B cell (primary cell): ENCODE measurements at regions of chr17 and their contacts with region 1.

Region 1: GRCh38 chr17:7851438-7852256 is 3.2 kb upstream of the TMEM88 start:
- DNase-seq: peak; percentile 98
- ATAC-seq: peak; percentile 95
- H3K4me3 ChIP-seq: peak overlapping the region in 4 of 5 experiments; percentile 28 to 50 (median 38)
- H3K4me3 Mint-ChIP-seq: peak overlapping the region; percentile 71
- H3K27ac ChIP-seq: peak overlapping the region; percentile 55 to 56
- H3K27ac Mint-ChIP-seq: peak overlapping the region; percentile 82
- H3K4me1 ChIP-seq: peaks cover 20 to 33% of the 10 kb centered on the region in 2 donors
- H3K4me1 Mint-ChIP-seq: peaks cover 24% of the 10 kb centered on the region
- H3K27me3 ChIP-seq: no peaks in the 10 kb centered on the region
- H3K27me3 Mint-ChIP-seq: no peaks in the 10 kb centered on the region
- CTCF ChIP-seq: peak; percentile 93

Region 2: DNA sequence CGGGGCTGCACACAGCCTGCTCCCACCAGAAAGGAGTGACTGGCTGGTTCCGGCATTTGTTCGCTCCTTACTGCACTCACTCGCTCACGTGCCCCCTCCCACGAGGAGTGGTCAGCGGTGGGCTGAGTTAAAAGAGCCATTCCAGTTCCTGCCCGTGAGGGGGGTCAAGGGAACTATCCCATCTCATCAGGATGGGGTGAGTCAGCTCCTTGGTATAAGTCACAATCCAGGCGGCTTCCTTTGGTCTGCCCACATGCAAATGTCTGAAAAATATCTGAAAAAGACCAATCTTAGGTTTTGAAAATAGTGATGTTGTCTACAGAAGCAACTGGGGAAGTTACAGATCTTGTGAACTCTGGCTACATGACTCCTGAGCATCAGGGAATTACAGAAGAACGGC is 312.8 kb before region 1 on chr17:
- CTCF ChIA-PET with region 1: no interaction called
- POLR2A ChIA-PET with region 1: no interaction called
- intact Hi-C with region 1: no loop called
- DNase-seq: no peak
- ATAC-seq: no peak
- H3K4me3 ChIP-seq: no peak overlapping the region
- H3K4me3 Mint-ChIP-seq: no peak overlapping the region
- H3K27ac ChIP-seq: no peak overlapping the region
- H3K27ac Mint-ChIP-seq: no peak overlapping the region
- H3K4me1 ChIP-seq: no peaks in the 10 kb centered on the region
- H3K4me1 Mint-ChIP-seq: no peaks in the 10 kb centered on the region
- H3K27me3 ChIP-seq: no peaks in the 10 kb centered on the region
- H3K27me3 Mint-ChIP-seq: no peaks in the 10 kb centered on the region
- CTCF ChIP-seq: no peak

Region 3: DNA sequence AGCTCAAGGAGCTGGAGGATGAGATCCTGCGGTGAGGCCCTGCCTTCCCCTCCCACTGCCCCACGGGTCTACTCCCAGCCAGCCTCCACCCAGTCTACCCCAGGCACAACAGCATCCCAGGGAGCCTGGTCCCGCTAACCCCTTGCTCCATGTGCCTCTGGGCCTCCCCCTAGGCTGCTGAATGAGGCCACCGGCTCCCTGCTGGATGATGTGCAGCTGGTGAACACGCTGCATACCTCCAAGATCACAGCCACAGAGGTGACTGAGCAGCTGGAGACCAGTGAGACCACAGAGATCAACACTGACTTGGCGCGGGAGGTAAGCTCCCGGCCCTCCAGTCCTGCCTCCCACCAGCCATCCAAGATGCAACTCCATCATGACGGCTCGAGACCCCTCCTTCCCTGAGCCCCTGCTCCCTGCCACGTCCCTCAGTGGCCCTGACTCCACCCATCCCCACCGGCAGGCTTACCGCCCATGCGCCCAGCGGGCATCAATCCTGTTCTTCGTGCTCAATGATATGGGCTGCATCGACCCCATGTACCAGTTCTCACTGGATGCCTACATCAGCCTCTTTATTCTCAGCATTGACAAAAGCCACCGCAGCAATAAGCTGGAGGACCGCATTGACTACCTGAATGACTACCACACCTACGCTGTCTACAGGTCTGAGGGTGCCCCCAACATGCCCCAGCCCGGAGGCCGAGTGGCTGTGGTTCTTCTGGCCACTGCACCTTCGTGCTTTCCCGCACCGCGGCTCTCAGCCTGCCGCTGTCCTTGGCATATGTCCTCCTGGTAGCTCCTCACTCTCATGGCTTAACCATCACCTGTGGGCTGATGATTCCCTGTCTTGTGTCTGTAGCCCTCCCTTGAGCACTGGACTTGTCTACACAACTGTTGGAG is 32.7 kb before region 1 on chr17:
- CTCF ChIA-PET with region 1: interaction called, 9 read pairs
- POLR2A ChIA-PET with region 1: no interaction called
- intact Hi-C with region 1: loop called (anchors 1 kb)
- DNase-seq: no peak
- ATAC-seq: no peak
- H3K4me3 ChIP-seq: no peak overlapping the region
- H3K4me3 Mint-ChIP-seq: no peak overlapping the region
- H3K27ac ChIP-seq: no peak overlapping the region
- H3K27ac Mint-ChIP-seq: no peak overlapping the region
- H3K4me1 ChIP-seq: no peaks in the 10 kb centered on the region
- H3K4me1 Mint-ChIP-seq: no peaks in the 10 kb centered on the region
- H3K27me3 ChIP-seq: no peaks in the 10 kb centered on the region
- H3K27me3 Mint-ChIP-seq: peaks cover 8% of the 10 kb centered on the region
- CTCF ChIP-seq: no peak

Region 4: GRCh38 chr17:7825206-7825990 is 26.2 kb before region 1 on chr17:
- CTCF ChIA-PET with region 1: interaction called, 12 read pairs
- POLR2A ChIA-PET with region 1: no interaction called
- intact Hi-C with region 1: loop called (anchors 1 kb)
- DNase-seq: no peak
- ATAC-seq: no peak
- H3K4me3 ChIP-seq: no peak overlapping the region
- H3K4me3 Mint-ChIP-seq: no peak overlapping the region
- H3K27ac ChIP-seq: no peak overlapping the region
- H3K27ac Mint-ChIP-seq: no peak overlapping the region
- H3K4me1 ChIP-seq: no peaks in the 10 kb centered on the region
- H3K4me1 Mint-ChIP-seq: no peaks in the 10 kb centered on the region
- H3K27me3 ChIP-seq: peaks cover 0 to 2% (median under 1%) of the 10 kb centered on the region in 4 experiments
- H3K27me3 Mint-ChIP-seq: peaks cover 21% of the 10 kb centered on the region
- CTCF ChIP-seq: no peak

Region 5: GRCh38 chr17:8016632-8017478 is 165.2 kb after region 1 on chr17:
- CTCF ChIA-PET with region 1: no interaction called
- POLR2A ChIA-PET with region 1: no interaction called
- intact Hi-C with region 1: no loop called
- DNase-seq: peak; percentile 58
- ATAC-seq: peak; percentile 64
- H3K4me3 ChIP-seq: peak overlapping the region in 4 of 5 experiments; percentile 23 to 54 (median 42)
- H3K4me3 Mint-ChIP-seq: peak overlapping the region; percentile 76
- H3K27ac ChIP-seq: no peak overlapping the region
- H3K27ac Mint-ChIP-seq: no peak overlapping the region
- H3K4me1 ChIP-seq: peaks cover 27 to 28% of the 10 kb centered on the region in 2 donors
- H3K4me1 Mint-ChIP-seq: peaks cover 25% of the 10 kb centered on the region
- H3K27me3 ChIP-seq: peaks cover 0 to 61% (median 20%) of the 10 kb centered on the region in 4 experiments
- H3K27me3 Mint-ChIP-seq: peaks cover 66% of the 10 kb centered on the region
- CTCF ChIP-seq: peak; percentile 61

Region 6: GRCh38 chr17:8079291-8080207 is 227.9 kb after region 1 on chr17:
- CTCF ChIA-PET with region 1: no interaction called
- POLR2A ChIA-PET with region 1: no interaction called
- intact Hi-C with region 1: no loop called
- DNase-seq: peak; percentile 90
- ATAC-seq: peak; percentile 82
- H3K4me3 ChIP-seq: peak overlapping the region in 4 of 5 experiments; percentile 57 to 76 (median 70)
- H3K4me3 Mint-ChIP-seq: peak overlapping the region; percentile 96
- H3K27ac ChIP-seq: peak overlapping the region; percentile 48 to 75
- H3K27ac Mint-ChIP-seq: peak overlapping the region; percentile 92
- H3K4me1 ChIP-seq: peaks cover 9 to 15% of the 10 kb centered on the region in 2 donors
- H3K4me1 Mint-ChIP-seq: peaks cover 14% of the 10 kb centered on the region
- H3K27me3 ChIP-seq: peaks cover 0 to 19% (median 10%) of the 10 kb centered on the region in 4 experiments
- H3K27me3 Mint-ChIP-seq: peaks cover 6% of the 10 kb centered on the region
- CTCF ChIP-seq: peak; percentile 90